ENCODE measurements at regions of chr7 and their contacts with region 1.

Region 1: GRCh38 chr7:76515999-76516443 is 5.7 kb downstream of the UPK3B start:
- DNase-seq: no peak
- ATAC-seq: peak; percentile 89
- H3K4me3 ChIP-seq: no peak overlapping the region
- H3K27ac ChIP-seq: no peak overlapping the region
- H3K4me1 ChIP-seq: no peaks in the 10 kb centered on the region
- H3K27me3 ChIP-seq: no peaks in the 10 kb centered on the region
- CTCF ChIP-seq: peak; percentile 92 to 99 (median 96)
- EP300 ChIP-seq: no peak
- POLR2A ChIP-seq: no peak
- RAD21 ChIP-seq: peak; percentile 91

Region 2: GRCh38 chr7:76997381-76997780 is 481.4 kb after region 1 on chr7:
- CTCF ChIA-PET with region 1: no interaction called
- POLR2A ChIA-PET with region 1: no interaction called
- RAD21 ChIA-PET with region 1: no interaction called
- SMC1A ChIA-PET with region 1: no interaction called
- in situ Hi-C with region 1: loop called (anchors 25 kb)
- intact Hi-C with region 1: no loop called
- DNase-seq: no peak
- ATAC-seq: no peak
- H3K4me3 ChIP-seq: no peak overlapping the region
- H3K27ac ChIP-seq: no peak overlapping the region
- H3K4me1 ChIP-seq: no peaks in the 10 kb centered on the region
- H3K27me3 ChIP-seq: no peaks in the 10 kb centered on the region
- CTCF ChIP-seq: no peak
- EP300 ChIP-seq: no peak
- POLR2A ChIP-seq: no peak; the same call in 1 of the 2 replicates
- RAD21 ChIP-seq: no peak